ENCODE measurements at regions of chr10 and their contacts with region 1.

Region 1: DNA sequence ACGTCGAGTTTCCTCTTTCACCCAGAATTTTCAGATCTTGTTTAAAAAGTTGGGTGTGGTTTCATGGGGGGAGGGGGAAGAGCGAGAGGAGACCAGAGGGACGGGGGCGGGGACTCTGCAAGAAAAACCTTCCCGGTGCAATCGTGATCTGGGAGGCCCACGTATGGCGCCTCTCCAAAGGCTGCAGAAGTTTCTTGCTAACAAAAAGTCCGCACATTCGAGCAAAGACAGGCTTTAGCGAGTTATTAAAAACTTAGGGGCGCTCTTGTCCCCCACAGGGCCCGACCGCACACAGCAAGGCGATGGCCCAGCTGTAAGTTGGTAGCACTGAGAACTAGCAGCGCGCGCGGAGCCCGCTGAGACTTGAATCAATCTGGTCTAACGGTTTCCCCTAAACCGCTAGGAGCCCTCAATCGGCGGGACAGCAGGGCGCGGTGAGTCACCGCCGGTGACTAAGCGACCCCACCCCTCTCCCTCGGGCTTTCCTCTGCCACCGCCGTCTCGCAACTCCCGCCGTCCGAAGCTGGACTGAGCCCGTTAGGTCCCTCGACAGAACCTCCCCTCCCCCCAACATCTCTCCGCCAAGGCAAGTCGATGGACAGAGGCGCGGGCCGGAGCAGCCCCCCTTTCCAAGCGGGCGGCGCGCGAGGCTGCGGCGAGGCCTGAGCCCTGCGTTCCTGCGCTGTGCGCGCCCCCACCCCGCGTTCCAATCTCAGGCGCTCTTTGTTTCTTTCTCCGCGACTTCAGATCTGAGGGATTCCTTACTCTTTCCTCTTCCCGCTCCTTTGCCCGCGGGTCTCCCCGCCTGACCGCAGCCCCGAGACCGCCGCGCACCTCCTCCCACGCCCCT is at the start of gene VIM:
- DNase-seq: peak; percentile 97
- H3K4me3 ChIP-seq: peak within 1 kb of the TSS; percentile 71 to 94 (median 84)
- H3K27ac ChIP-seq: peak within 1 kb of the TSS; percentile 95 to 100 (median 97)
- H3K4me1 ChIP-seq: peaks cover 30 to 68% (median 44%) of the 10 kb centered on the region in 4 donors
- H3K27me3 ChIP-seq: no peaks in the 10 kb centered on the region
- CTCF ChIP-seq: peak in 1 of 3 experiments; percentile 7
- EP300 ChIP-seq: no peak
- POLR2A ChIP-seq: no peak
- total RNA-seq, gene VIM: 1,242 to 2,218 (median 1,951) TPM

Region 2: GRCh38 chr10:17075533-17076359 is 152.6 kb before region 1 on chr10:
- intact Hi-C with region 1: loop called (anchors 10 kb)
- DNase-seq: no peak
- H3K4me3 ChIP-seq: no peak overlapping the region
- H3K27ac ChIP-seq: peak overlapping the region; percentile 32 to 64 (median 42)
- H3K4me1 ChIP-seq: peaks cover 8 to 23% (median 17%) of the 10 kb centered on the region in 4 donors
- H3K27me3 ChIP-seq: no peaks in the 10 kb centered on the region
- CTCF ChIP-seq: no peak
- EP300 ChIP-seq: no peak
- POLR2A ChIP-seq: no peak

Region 3: GRCh38 chr10:17086416-17086815 is 141.9 kb before region 1 on chr10:
- intact Hi-C with region 1: no loop called
- DNase-seq: no peak
- H3K4me3 ChIP-seq: no peak overlapping the region
- H3K27ac ChIP-seq: no peak overlapping the region
- H3K4me1 ChIP-seq: peaks cover 0 to 7% (median 2%) of the 10 kb centered on the region in 4 donors
- H3K27me3 ChIP-seq: no peaks in the 10 kb centered on the region
- CTCF ChIP-seq: no peak
- EP300 ChIP-seq: no peak
- POLR2A ChIP-seq: no peak

Region 4: DNA sequence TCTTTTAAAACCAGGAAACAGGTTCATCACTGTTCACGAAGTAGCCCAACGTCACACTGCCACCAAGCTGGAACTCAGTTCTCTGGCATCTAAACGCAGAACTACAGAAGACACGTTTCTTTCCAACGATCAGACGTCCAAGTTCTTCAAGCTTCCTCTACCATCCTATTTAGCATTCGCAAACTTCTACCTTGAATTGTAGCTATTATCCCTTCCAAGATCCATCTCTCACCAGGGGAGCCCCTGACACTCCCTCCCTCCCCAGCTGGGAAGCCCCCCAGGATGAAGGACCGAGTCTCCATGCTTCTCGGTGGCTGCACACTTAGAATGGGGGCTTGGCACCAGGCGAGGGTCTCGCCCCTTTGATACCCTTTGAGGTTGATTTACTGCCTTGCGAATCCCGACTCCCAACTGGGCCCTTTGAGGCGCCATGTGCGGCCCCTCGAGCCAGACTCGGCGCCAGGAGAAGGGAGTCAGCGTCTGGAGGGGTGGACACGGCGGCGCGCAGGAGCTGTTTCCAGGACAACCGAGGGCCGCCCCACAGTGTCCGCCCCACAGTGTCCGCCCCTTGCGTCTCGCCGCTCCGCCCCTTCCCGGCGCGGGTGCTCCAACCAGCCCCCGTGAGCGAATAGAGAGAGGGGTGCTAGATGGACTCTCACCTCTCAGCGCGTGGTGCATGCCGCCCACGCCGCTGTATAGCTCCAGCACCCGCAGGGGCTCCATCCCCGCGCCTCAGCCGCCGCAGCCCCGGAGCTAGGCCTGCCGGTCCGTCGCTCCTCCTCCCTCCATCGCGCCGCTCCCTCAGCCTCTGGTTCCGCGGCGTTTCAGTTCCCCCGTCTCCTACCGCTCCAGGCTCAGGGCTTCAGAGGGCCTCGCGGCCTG is 27.2 kb before region 1 on chr10 and contains the start of gene TRDMT1:
- intact Hi-C with region 1: loop called (anchors 2 kb)
- DNase-seq: peak; percentile 96
- H3K4me3 ChIP-seq: peak within 1 kb of the TSS; percentile 68 to 84 (median 80)
- H3K27ac ChIP-seq: peak within 1 kb of the TSS; percentile 91 to 96 (median 94)
- H3K4me1 ChIP-seq: peaks cover 13 to 24% (median 20%) of the 10 kb centered on the region in 4 donors
- H3K27me3 ChIP-seq: no peaks in the 10 kb centered on the region
- CTCF ChIP-seq: peak in 1 of 3 experiments; percentile 16
- EP300 ChIP-seq: no peak
- POLR2A ChIP-seq: peak; percentile 57
- total RNA-seq, gene TRDMT1: 4.8 to 5.8 (median 5.5) TPM